Activated naive CD4-positive, alpha-beta T cell treated with anti-CD3 and anti-CD28 coated beads for 36 hours (primary cell): ENCODE measurements at regions of chr22 and their contacts with region 1.

Region 1: DNA sequence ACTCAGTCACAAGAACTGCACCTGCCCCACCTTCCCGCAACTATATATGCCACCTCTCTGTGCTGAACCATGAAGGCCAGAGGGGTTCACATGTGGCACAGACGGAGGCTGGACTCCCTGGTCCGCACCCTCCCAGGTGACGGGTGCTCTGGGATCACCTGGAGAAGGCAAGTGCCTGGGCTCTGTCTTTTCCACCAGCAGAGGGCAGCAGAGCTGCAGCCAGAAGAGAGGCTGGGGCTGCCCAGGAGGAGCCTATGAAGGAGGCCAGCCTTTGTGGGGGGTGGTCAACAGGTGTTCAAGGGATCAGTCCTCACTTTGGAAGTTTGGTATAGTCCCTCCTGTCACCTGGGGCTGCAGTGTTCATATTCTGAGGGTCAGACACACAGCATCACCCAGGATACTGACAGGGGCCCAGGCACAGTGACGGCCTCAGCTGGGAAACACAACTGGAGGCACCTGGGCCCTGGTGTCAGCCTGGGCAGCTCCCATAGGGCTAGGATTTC is 39.2 kb upstream of the IGLL5 start:
- DNase-seq: peak; percentile 84
- H3K4me3 Mint-ChIP-seq: no peak overlapping the region
- H3K27ac Mint-ChIP-seq: no peak overlapping the region
- H3K4me1 Mint-ChIP-seq: peaks cover 31% of the 10 kb centered on the region
- H3K27me3 Mint-ChIP-seq: no peaks in the 10 kb centered on the region

Region 2: GRCh38 chr22:22787786-22788459 is 60.5 kb before region 1 on chr22:
- CTCF ChIA-PET with region 1: interaction called, 16 read pairs
- intact Hi-C with region 1: no loop called
- DNase-seq: peak; percentile 74
- H3K4me3 Mint-ChIP-seq: no peak overlapping the region
- H3K27ac Mint-ChIP-seq: no peak overlapping the region
- H3K4me1 Mint-ChIP-seq: peaks cover 16% of the 10 kb centered on the region
- H3K27me3 Mint-ChIP-seq: no peaks in the 10 kb centered on the region

Region 3: DNA sequence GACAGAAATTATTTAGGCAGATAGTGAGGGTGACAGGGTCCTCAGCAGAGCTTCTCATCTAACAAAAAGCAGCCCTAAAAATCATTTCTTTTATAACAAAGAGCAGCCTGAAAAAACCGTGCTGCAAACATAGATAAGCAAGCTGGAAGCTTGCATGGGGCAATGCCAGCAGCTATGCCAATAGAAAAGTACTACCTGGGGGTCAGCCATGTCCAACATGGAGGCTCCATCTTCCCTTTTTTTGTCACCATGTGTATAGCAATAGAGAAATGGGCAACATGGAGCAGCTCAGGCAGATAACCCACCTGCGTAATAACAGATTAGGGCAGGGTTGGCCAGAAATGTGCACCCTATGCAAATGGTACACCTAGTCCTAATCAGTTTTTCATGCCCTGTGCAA is 18.2 kb before region 1 on chr22:
- CTCF ChIA-PET with region 1: interaction called, 10 read pairs
- intact Hi-C with region 1: no loop called
- DNase-seq: no peak
- H3K4me3 Mint-ChIP-seq: no peak overlapping the region
- H3K27ac Mint-ChIP-seq: no peak overlapping the region
- H3K4me1 Mint-ChIP-seq: peaks cover 2% of the 10 kb centered on the region
- H3K27me3 Mint-ChIP-seq: no peaks in the 10 kb centered on the region

Region 4: GRCh38 chr22:22865311-22866072 is 17.1 kb after region 1 on chr22:
- CTCF ChIA-PET with region 1: interaction called, 13 read pairs
- intact Hi-C with region 1: no loop called
- DNase-seq: peak; percentile 62
- H3K4me3 Mint-ChIP-seq: no peak overlapping the region
- H3K27ac Mint-ChIP-seq: no peak overlapping the region
- H3K4me1 Mint-ChIP-seq: peaks cover 37% of the 10 kb centered on the region
- H3K27me3 Mint-ChIP-seq: no peaks in the 10 kb centered on the region

Region 5: DNA sequence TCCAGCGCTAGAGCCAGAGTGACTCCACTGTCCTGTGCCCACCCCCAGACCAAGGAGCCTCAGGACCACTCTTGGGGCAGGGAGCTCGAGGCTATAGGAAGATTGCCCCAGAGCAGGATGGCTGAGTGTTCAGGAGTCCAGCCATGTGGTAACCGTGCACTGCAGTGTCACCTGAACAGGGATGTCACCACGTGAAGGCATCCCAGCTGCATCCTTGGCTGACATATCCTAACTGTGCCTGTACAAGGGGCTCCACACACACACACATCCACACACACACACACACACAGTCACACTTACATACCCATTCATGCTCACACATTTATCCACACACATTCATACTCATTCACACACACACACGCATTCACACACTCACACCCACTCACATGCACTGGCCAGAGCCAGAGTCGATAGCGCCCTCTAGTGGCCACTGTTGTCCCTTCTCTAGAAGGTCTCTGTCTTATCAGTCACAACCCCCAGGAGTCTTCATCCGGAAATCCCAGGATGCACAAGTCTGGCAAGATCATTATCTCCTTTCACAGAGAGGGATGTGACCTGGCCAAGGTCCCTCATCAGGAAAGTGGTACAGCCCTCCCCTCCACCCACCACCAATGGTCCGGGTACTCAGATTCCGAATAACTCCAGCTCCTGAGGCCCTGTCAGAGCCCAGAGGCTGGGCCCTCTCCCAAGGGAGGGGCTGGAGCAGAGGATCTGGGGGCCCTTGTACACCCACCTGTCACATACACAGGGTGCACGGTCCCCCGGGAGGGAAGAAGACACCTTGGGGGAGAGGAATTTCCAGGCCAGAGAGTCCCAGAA is 94.3 kb after region 1 on chr22:
- CTCF ChIA-PET with region 1: interaction called, 21 read pairs
- intact Hi-C with region 1: no loop called
- DNase-seq: peak; percentile 89
- H3K4me3 Mint-ChIP-seq: no peak overlapping the region
- H3K27ac Mint-ChIP-seq: no peak overlapping the region
- H3K4me1 Mint-ChIP-seq: peaks cover 1% of the 10 kb centered on the region
- H3K27me3 Mint-ChIP-seq: peaks cover 2% of the 10 kb centered on the region